ENCODE measurements at regions of chr1 and their contacts with region 1.

Region 1: GRCh38 chr1:26864610-26865527 is 1.9 kb downstream of the SFN start:
- DNase-seq: peak; percentile 88 to 96 (median 91)
- ATAC-seq: peak; percentile 98
- H3K4me3 ChIP-seq: peak overlapping the region; percentile 97
- H3K4me3 Mint-ChIP-seq: peak overlapping the region; percentile 86 to 100 (median 96)
- H3K27ac ChIP-seq: peak overlapping the region; percentile 78
- H3K27ac Mint-ChIP-seq: peak overlapping the region; percentile 65 to 96 (median 93)
- H3K4me1 ChIP-seq: peaks cover 5 to 10% of the 10 kb centered on the region in 2 donors
- H3K4me1 Mint-ChIP-seq: peaks cover 10 to 33% (median 24%) of the 10 kb centered on the region in 7 donors
- H3K27me3 ChIP-seq: no peaks in the 10 kb centered on the region
- H3K27me3 Mint-ChIP-seq: no peaks in the 10 kb centered on the region

Region 2: GRCh38 chr1:26826261-26827105 is 38.4 kb before region 1 on chr1 and contains the start of gene ZDHHC18:
- CTCF ChIA-PET with region 1: interaction called, 3 read pairs
- POLR2A ChIA-PET with region 1: interaction called, 5 read pairs
- intact Hi-C with region 1: loop called in 1 of 2 experiments (anchors 1 kb)
- DNase-seq: peak; percentile 56 to 91 (median 77)
- ATAC-seq: peak; percentile 96
- H3K4me3 ChIP-seq: peak within 1 kb of the TSS; percentile 86
- H3K4me3 Mint-ChIP-seq: peak within 1 kb of the TSS; percentile 89 to 99 (median 93)
- H3K27ac ChIP-seq: peak within 1 kb of the TSS; percentile 98
- H3K27ac Mint-ChIP-seq: peak within 1 kb of the TSS; percentile 93 to 100 (median 98)
- H3K4me1 ChIP-seq: peaks cover 39 to 42% of the 10 kb centered on the region in 2 donors
- H3K4me1 Mint-ChIP-seq: peaks cover 37 to 70% (median 64%) of the 10 kb centered on the region in 7 donors
- H3K27me3 ChIP-seq: no peaks in the 10 kb centered on the region
- H3K27me3 Mint-ChIP-seq: no peaks in the 10 kb centered on the region
- total RNA-seq, gene ZDHHC18: 36.4 to 72.4 (median 39.7) TPM

Region 3: GRCh38 chr1:26853156-26853555 is 11.7 kb before region 1 on chr1:
- CTCF ChIA-PET with region 1: interaction called, 4 read pairs
- POLR2A ChIA-PET with region 1: interaction called, 14 read pairs
- intact Hi-C with region 1: loop called in 1 of 2 experiments (anchors 1 kb)
- DNase-seq: peak; percentile 64 to 85 (median 74)
- ATAC-seq: peak; percentile 89
- H3K4me3 ChIP-seq: no peak overlapping the region
- H3K4me3 Mint-ChIP-seq: no peak overlapping the region
- H3K27ac ChIP-seq: no peak overlapping the region
- H3K27ac Mint-ChIP-seq: peak overlapping the region in 1 of 9 donors; percentile 20
- H3K4me1 ChIP-seq: no peaks in the 10 kb centered on the region
- H3K4me1 Mint-ChIP-seq: peaks cover 0 to 16% (median 0%) of the 10 kb centered on the region in 7 donors
- H3K27me3 ChIP-seq: no peaks in the 10 kb centered on the region
- H3K27me3 Mint-ChIP-seq: no peaks in the 10 kb centered on the region

Region 4: GRCh38 chr1:26889551-26890466 is 24.9 kb after region 1 on chr1 and contains the start of gene GPN2:
- CTCF ChIA-PET with region 1: interaction called, 5 read pairs
- POLR2A ChIA-PET with region 1: interaction called, 8 read pairs
- intact Hi-C with region 1: loop called (anchors 1 kb)
- DNase-seq: peak; percentile 49 to 78 (median 73)
- ATAC-seq: peak; percentile 97
- H3K4me3 ChIP-seq: peak within 1 kb of the TSS; percentile 98
- H3K4me3 Mint-ChIP-seq: peak within 1 kb of the TSS; percentile 89 to 98 (median 94)
- H3K27ac ChIP-seq: peak within 1 kb of the TSS; percentile 94
- H3K27ac Mint-ChIP-seq: peak within 1 kb of the TSS; percentile 93 to 96 (median 95)
- H3K4me1 ChIP-seq: peaks cover 7% of the 10 kb centered on the region in 2 donors
- H3K4me1 Mint-ChIP-seq: peaks cover 22 to 43% (median 35%) of the 10 kb centered on the region in 7 donors
- H3K27me3 ChIP-seq: no peaks in the 10 kb centered on the region
- H3K27me3 Mint-ChIP-seq: no peaks in the 10 kb centered on the region
- total RNA-seq, gene GPN2: 22.1 to 50.6 (median 34.8) TPM

Region 5: GRCh38 chr1:27026621-27027574 is 162.0 kb after region 1 on chr1:
- CTCF ChIA-PET with region 1: no interaction called
- POLR2A ChIA-PET with region 1: no interaction called
- intact Hi-C with region 1: no loop called
- DNase-seq: no peak
- ATAC-seq: no peak
- H3K4me3 ChIP-seq: no peak overlapping the region
- H3K4me3 Mint-ChIP-seq: no peak overlapping the region
- H3K27ac ChIP-seq: no peak overlapping the region
- H3K27ac Mint-ChIP-seq: peak overlapping the region in 2 of 9 donors; percentile 43 to 62
- H3K4me1 ChIP-seq: no peaks in the 10 kb centered on the region
- H3K4me1 Mint-ChIP-seq: peaks cover 0 to 3% (median 0%) of the 10 kb centered on the region in 7 donors
- H3K27me3 ChIP-seq: no peaks in the 10 kb centered on the region
- H3K27me3 Mint-ChIP-seq: peaks cover 0 to 10% (median 5%) of the 10 kb centered on the region in 5 donors

Region 6: GRCh38 chr1:27154991-27155781 is 290.3 kb after region 1 on chr1 and contains the start of gene SLC9A1:
- CTCF ChIA-PET with region 1: no interaction called
- POLR2A ChIA-PET with region 1: no interaction called
- intact Hi-C with region 1: loop called in 1 of 2 experiments (anchors 1 kb)
- DNase-seq: peak; percentile 90 to 96 (median 94)
- ATAC-seq: peak; percentile 98
- H3K4me3 ChIP-seq: peak within 1 kb of the TSS; percentile 40
- H3K4me3 Mint-ChIP-seq: peak within 1 kb of the TSS; percentile 82 to 97 (median 90)
- H3K27ac ChIP-seq: peak within 1 kb of the TSS; percentile 90
- H3K27ac Mint-ChIP-seq: peak within 1 kb of the TSS; percentile 96 to 100 (median 99)
- H3K4me1 ChIP-seq: peaks cover 29 to 36% of the 10 kb centered on the region in 2 donors
- H3K4me1 Mint-ChIP-seq: peaks cover 38 to 52% (median 49%) of the 10 kb centered on the region in 7 donors
- H3K27me3 ChIP-seq: no peaks in the 10 kb centered on the region
- H3K27me3 Mint-ChIP-seq: no peaks in the 10 kb centered on the region
- total RNA-seq, gene SLC9A1: 13.2 to 25.7 (median 21.1) TPM

Measured in naive thymus-derived CD4-positive, alpha-beta T cell (primary cell).